PC-3 (cell line): ENCODE measurements at regions of chr16 and their contacts with region 1.

Region 1: DNA sequence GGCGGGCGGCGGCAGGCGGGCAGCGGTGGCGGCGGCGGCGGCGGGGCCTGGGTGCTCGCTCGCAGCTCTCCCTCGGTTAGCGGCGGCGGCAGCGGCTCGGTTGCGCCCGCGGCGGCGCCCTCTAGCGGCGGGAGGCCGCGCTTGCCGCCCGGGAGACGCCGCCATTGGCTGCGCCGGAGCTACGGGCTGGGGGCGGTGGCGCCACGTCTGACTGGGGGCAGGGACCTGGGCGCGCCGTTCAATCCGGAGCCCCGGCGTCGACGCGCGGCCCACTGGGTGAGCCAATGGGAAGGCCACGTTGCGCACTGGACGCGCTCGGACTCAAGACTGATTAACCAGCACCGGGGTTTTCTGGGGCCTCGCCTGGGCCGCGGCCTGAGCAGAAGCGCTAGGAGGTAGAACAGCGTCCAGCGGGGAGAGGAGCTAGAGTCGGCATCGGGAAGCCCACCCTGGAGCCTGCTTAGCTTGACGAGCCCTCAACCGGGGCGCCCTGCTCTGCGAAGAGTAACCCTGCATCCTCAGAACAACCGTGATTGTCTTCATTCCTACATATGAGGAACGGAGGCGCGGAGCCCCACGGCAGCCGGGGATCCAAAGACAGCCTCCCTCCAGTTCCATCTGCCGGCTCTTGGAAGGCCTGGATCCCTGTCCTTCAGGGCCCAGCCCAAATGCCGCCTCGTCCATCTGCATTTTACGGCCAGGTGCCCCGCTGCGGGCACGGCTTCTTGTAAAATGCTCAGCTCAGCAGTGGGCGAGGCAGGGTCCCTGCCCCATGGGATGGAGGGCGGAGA is at the start of gene ZC3H7A:
- DNase-seq: peak; percentile 93
- ATAC-seq: peak; percentile 96
- H3K4me3 ChIP-seq: peak within 1 kb of the TSS; percentile 97
- H3K27ac ChIP-seq: peak within 1 kb of the TSS; percentile 66
- H3K4me1 ChIP-seq: peaks cover 11% of the 10 kb centered on the region
- H3K27me3 ChIP-seq: no peaks in the 10 kb centered on the region
- CTCF ChIP-seq: peak; percentile 45; the same call in 1 of the 2 replicates
- total RNA-seq, gene ZC3H7A: 21.2 and 26.4 TPM in 2 replicates

Region 2: GRCh38 chr16:11783319-11784037 is 13.9 kb before region 1 on chr16:
- CTCF ChIA-PET with region 1: no interaction called
- POLR2A ChIA-PET with region 1: no interaction called
- intact Hi-C with region 1: loop called (anchors 2 kb)
- DNase-seq: peak; percentile 9
- ATAC-seq: peak; percentile 62
- H3K4me3 ChIP-seq: peak overlapping the region; percentile 46
- H3K27ac ChIP-seq: peak overlapping the region; percentile 80
- H3K4me1 ChIP-seq: peaks cover 19% of the 10 kb centered on the region
- H3K27me3 ChIP-seq: no peaks in the 10 kb centered on the region
- CTCF ChIP-seq: no peak

Region 3: GRCh38 chr16:11819798-11820197 is 22.4 kb after region 1 on chr16:
- CTCF ChIA-PET with region 1: no interaction called
- POLR2A ChIA-PET with region 1: no interaction called
- intact Hi-C with region 1: no loop called
- DNase-seq: no peak
- ATAC-seq: no peak
- H3K4me3 ChIP-seq: no peak overlapping the region
- H3K27ac ChIP-seq: no peak overlapping the region
- H3K4me1 ChIP-seq: no peaks in the 10 kb centered on the region
- H3K27me3 ChIP-seq: no peaks in the 10 kb centered on the region
- CTCF ChIP-seq: no peak